A673 (cell line): ENCODE measurements at regions of chr12 and their contacts with region 1.

Region 1: DNA sequence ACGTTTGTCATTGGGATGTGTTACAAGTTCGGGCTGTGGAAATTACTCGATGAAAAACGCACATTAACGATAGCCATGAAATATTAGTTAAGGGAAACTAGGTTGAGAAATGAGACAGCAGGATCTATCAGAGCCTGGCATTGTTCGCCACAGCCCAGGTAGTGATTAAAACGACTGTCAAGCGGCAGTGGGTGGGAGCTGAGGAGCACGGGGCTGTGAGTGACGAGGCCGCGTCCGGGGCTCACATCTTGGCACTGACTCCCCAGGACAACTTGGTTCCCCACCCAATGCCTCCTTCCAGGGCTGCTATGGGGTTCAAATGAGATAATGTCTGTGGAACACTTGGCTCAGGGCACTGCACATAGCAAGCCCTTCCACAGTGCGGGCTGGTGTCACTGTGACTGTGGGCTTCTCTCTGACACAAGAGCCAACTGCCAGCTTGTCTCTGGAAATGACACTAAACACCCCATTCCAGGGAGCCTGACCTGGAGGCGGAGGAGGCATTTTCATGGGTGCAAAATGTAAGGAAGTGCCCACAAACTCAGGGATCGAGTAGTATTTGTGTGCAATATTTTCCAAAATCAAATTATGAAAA is 19.3 kb downstream of the MMAB start:
- DNase-seq: no peak
- H3K4me3 ChIP-seq: no peak overlapping the region
- H3K27ac ChIP-seq: no peak overlapping the region
- H3K4me1 ChIP-seq: no peaks in the 10 kb centered on the region
- H3K27me3 ChIP-seq: peaks cover 2% of the 10 kb centered on the region
- CTCF ChIP-seq: no peak

Region 2: DNA sequence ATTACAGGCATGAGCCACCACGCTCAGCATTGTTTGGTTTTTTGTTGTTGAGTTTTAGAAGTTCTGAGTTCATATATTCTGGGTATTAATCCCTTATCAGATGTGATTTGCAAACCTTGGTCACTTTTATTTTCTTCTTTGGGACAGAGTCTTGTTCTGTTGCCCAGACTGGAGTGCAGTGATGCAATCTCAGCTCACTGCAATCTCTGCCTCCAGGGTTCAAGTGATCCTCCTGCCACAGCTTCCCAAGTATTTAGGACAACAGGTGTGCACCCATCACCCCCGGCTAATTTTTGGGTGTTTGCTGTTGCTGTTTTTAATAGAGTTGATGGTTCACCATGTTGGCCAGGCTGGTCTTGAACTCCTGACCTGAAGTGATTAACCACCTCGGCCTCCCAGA is 489.9 kb before region 1 on chr12:
- CTCF ChIA-PET with region 1: no interaction called
- POLR2A ChIA-PET with region 1: interaction called, 30 read pairs
- intact Hi-C with region 1: no loop called
- DNase-seq: no peak
- H3K4me3 ChIP-seq: no peak overlapping the region
- H3K27ac ChIP-seq: no peak overlapping the region
- H3K4me1 ChIP-seq: no peaks in the 10 kb centered on the region
- H3K27me3 ChIP-seq: no peaks in the 10 kb centered on the region
- CTCF ChIP-seq: no peak

Region 3: DNA sequence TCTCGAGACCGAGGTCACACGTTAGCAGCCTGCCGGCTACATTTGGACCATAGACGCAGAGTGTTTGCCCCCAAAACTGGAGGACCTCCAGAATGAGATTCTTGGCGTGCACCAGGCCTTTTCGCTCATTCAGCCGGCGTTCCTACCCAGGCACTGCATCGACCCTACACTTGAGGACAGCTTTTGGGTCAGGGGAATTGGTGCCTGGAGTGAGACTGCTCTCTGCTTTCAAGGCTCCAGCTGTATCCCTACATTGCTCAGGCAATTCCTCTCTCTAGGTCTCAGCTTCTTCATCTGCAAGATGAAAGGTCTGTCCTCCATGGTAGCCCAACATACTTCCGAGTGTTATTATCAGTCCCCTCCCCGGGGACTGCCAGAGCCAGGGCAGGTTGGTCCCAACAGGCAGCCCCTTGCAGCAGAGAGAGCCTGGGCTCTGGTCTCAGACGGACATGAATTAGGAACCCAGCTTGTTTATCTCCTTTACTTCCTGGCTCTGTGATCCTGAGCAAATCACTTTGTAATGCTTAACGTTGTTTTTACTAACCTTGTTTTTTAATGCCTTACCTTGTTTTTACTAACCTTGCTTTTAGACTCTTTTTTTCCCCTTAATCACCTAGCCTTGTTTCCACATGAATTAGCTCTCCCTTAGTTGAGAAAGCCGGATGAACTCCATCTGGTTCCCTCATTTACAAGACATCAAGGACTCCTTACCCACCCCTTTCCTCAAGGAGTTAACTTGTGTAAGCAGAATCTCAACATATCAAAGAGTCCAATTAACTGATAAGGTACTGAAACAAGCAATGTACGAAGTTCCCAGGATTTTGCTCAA is 347.0 kb after region 1 on chr12:
- CTCF ChIA-PET with region 1: no interaction called
- POLR2A ChIA-PET with region 1: no interaction called
- intact Hi-C with region 1: no loop called
- DNase-seq: peak; percentile 18
- H3K4me3 ChIP-seq: peak overlapping the region; percentile 67
- H3K27ac ChIP-seq: peak overlapping the region; percentile 86
- H3K4me1 ChIP-seq: peaks cover 6% of the 10 kb centered on the region
- H3K27me3 ChIP-seq: no peaks in the 10 kb centered on the region
- CTCF ChIP-seq: no peak

Region 4: GRCh38 chr12:109912853-109913321 is 358.9 kb after region 1 on chr12:
- CTCF ChIA-PET with region 1: no interaction called
- POLR2A ChIA-PET with region 1: no interaction called
- intact Hi-C with region 1: no loop called
- DNase-seq: no peak
- H3K4me3 ChIP-seq: no peak overlapping the region
- H3K27ac ChIP-seq: no peak overlapping the region
- H3K4me1 ChIP-seq: no peaks in the 10 kb centered on the region
- H3K27me3 ChIP-seq: no peaks in the 10 kb centered on the region
- CTCF ChIP-seq: no peak